ENCODE measurements at regions of chr6 and their contacts with region 1.

Region 1: DNA sequence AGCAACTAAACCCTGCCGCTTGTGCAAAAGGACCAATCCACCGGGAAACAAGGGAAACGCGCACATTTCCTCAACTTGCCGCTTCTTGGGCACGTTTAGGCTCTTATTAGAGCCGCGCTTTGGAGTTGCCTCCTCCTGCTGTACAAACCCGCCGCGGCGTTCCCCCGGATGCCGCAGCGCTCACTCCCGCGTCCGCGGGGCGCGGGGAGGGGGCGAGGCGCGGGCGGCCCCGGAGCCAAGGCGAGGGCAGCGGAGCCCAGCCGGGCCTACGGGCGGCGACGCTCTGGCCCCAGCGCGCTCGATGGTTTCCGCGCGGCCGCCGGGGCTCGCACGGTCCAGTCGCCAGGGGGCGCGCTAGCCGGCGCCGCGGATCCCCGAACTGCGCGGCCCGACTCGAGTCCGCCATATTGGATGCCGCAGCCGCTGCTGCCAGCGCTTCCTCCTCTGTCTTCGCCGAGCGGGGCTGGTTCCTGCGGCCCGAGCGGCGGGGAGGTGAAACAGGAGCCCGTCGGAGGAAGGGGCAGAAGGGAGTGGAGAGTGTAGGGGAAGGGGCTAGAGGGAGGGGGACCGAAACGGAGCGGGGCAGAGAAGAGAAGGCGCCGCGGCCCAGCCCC is at the start of gene SCAF8:
- DNase-seq: peak; percentile 23
- ATAC-seq: peak; percentile 87
- H3K4me3 ChIP-seq: peak within 1 kb of the TSS; percentile 88
- H3K27ac ChIP-seq: peak within 1 kb of the TSS; percentile 96
- H3K4me1 ChIP-seq: peaks cover 5% of the 10 kb centered on the region; the same call in 1 of the 2 replicates
- H3K27me3 ChIP-seq: no peaks in the 10 kb centered on the region
- CTCF ChIP-seq: peak; percentile 73 to 91 (median 73); a peak in 5 of 6 replicates
- EP300 ChIP-seq: peak in 1 of 2 experiments; percentile 45; a peak in 1 of 4 replicates
- POLR2A ChIP-seq: peak; percentile 93
- RAD21 ChIP-seq: peak; percentile 50
- polyA plus RNA-seq, gene SCAF8: 8.1 to 8.5 TPM

Region 2: DNA sequence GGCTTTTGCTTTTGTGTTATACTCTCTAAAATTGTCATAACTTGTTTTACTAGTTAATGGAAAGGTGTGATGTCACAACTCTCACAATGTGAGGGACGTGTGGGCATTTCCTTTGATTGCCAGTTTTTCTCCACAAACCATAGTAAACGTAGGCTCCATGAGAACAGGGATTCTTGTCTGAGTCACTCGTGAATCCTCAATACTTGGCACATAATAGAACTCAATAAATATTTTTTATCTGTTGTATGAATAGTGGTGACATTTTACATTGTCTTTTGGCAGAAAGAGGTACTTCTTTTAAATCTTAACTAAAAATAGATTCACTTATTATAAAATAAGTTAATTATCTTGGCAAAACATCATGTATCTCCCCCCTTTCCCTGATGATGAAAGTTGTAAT is 153.6 kb before region 1 on chr6:
- CTCF ChIA-PET with region 1: no interaction called
- POLR2A ChIA-PET with region 1: no interaction called
- RAD21 ChIA-PET with region 1: no interaction called
- SMC1A ChIA-PET with region 1: no interaction called
- in situ Hi-C with region 1: no loop called
- intact Hi-C with region 1: no loop called
- DNase-seq: no peak
- ATAC-seq: no peak
- H3K4me3 ChIP-seq: no peak overlapping the region
- H3K27ac ChIP-seq: no peak overlapping the region
- H3K4me1 ChIP-seq: no peaks in the 10 kb centered on the region
- H3K27me3 ChIP-seq: no peaks in the 10 kb centered on the region
- CTCF ChIP-seq: no peak
- EP300 ChIP-seq: no peak
- POLR2A ChIP-seq: no peak
- RAD21 ChIP-seq: no peak

Region 3: DNA sequence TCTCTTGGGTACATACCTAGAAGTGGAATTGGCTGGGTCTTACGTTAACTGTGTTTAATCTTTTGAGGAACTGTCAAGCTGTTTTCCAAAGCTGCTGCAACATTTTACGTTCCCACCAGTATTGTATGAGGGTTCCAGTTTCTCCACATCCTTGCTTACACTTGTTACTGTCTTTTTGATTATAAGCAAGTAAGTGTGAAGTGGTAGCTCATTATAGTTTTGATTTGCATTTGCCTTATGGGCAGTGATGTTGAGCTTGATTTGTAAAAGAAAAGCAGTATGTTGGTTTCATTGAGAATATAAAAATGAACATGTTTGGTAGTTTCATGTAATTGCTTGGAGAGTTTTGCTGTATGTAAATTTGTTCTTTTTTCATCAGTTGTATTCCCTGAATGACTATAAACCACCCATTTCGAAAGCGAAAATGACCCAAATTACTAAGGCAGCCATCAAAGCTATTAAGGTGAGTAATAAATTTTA is 40.5 kb after region 1 on chr6:
- CTCF ChIA-PET with region 1: interaction called, 3 read pairs
- POLR2A ChIA-PET with region 1: interaction called, 3 read pairs
- RAD21 ChIA-PET with region 1: interaction called, 9 read pairs
- SMC1A ChIA-PET with region 1: interaction called, 4 read pairs
- in situ Hi-C with region 1: no loop called
- intact Hi-C with region 1: loop called (anchors 5 kb)
- DNase-seq: peak; percentile 69
- ATAC-seq: peak; percentile 93
- H3K4me3 ChIP-seq: peak overlapping the region; percentile 34
- H3K27ac ChIP-seq: peak overlapping the region; percentile 84
- H3K4me1 ChIP-seq: peaks cover 15% of the 10 kb centered on the region; the same call in 1 of the 2 replicates
- H3K27me3 ChIP-seq: no peaks in the 10 kb centered on the region
- CTCF ChIP-seq: no peak
- EP300 ChIP-seq: peak; percentile 66 to 76
- POLR2A ChIP-seq: no peak
- RAD21 ChIP-seq: no peak

Region 4: DNA sequence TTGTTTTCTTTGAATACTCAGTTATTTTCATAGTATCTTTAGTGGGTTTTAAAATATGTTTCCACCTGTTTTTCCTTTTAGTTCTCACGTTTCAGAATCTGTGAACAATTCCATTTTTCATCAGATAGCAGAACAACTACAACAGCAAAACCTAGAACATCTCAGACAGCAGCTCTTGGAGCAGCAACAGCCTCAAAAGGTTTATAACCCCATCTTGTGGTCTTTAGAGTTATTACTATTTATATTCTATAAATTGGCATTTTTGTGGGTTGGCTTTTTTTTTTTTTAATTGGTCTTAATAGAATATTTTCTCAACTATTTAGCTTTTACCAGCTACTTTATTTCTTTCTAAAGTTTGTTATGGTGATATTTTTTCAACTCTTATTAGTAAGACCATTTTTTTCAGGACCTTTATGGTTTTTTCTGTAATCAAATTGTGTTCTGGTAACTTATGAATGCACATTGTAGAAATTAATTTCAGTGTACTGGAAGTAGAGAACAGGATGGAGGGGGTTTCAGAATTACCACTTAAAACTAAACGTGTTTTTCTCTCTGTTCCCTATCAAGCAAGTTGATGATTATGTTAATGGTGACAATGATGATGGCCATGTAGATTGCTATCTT is 72.3 kb after region 1 on chr6:
- CTCF ChIA-PET with region 1: interaction called, 9 read pairs
- POLR2A ChIA-PET with region 1: no interaction called
- RAD21 ChIA-PET with region 1: interaction called, 7 read pairs
- SMC1A ChIA-PET with region 1: interaction called, 6 read pairs
- in situ Hi-C with region 1: no loop called
- intact Hi-C with region 1: loop called (anchors 1 kb)
- DNase-seq: no peak
- ATAC-seq: peak; percentile 62
- H3K4me3 ChIP-seq: no peak overlapping the region
- H3K27ac ChIP-seq: no peak overlapping the region
- H3K4me1 ChIP-seq: no peaks in the 10 kb centered on the region
- H3K27me3 ChIP-seq: no peaks in the 10 kb centered on the region
- CTCF ChIP-seq: peak; percentile 31 to 58 (median 41); a peak in 4 of 6 replicates
- EP300 ChIP-seq: no peak
- POLR2A ChIP-seq: no peak
- RAD21 ChIP-seq: peak; percentile 90

Region 5: GRCh38 chr6:154981079-154981870 is 248.2 kb after region 1 on chr6:
- CTCF ChIA-PET with region 1: no interaction called
- POLR2A ChIA-PET with region 1: no interaction called
- RAD21 ChIA-PET with region 1: no interaction called
- SMC1A ChIA-PET with region 1: no interaction called
- in situ Hi-C with region 1: no loop called
- intact Hi-C with region 1: no loop called
- DNase-seq: peak; percentile 15
- ATAC-seq: peak; percentile 97
- H3K4me3 ChIP-seq: no peak overlapping the region
- H3K27ac ChIP-seq: no peak overlapping the region
- H3K4me1 ChIP-seq: peaks cover 5% of the 10 kb centered on the region; the same call in 1 of the 2 replicates
- H3K27me3 ChIP-seq: no peaks in the 10 kb centered on the region
- CTCF ChIP-seq: no peak
- EP300 ChIP-seq: no peak
- POLR2A ChIP-seq: no peak
- RAD21 ChIP-seq: no peak

Measured in GM12878 (cell line).